OCI-LY7 (cell line): ENCODE measurements at regions of chr20 and their contacts with region 1.

Region 1: DNA sequence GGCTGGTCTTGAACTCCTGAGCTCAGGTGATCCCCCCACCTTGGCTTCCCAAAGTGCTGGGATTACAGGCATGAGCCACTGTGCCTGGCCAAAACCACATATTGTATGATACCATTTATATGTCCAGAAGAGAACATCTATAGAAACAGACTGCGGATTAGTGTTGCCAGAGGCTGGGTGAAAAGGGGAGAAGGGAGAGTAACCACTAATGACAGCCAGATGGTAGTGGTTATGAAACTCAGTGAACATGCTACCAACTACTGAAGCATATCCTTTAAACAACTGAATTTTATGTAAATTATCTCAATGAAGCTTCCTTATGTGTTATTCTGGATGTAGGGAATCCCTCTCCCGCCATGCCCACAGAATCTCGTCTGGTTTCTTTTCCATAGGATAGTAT is 15.7 kb downstream of the SLC23A2 start:
- DNase-seq: peak; percentile 76
- H3K4me3 ChIP-seq: peak overlapping the region; percentile 35
- H3K27ac ChIP-seq: peak overlapping the region; percentile 89
- H3K4me1 ChIP-seq: peaks cover 64% of the 10 kb centered on the region
- CTCF ChIP-seq: no peak

Region 2: DNA sequence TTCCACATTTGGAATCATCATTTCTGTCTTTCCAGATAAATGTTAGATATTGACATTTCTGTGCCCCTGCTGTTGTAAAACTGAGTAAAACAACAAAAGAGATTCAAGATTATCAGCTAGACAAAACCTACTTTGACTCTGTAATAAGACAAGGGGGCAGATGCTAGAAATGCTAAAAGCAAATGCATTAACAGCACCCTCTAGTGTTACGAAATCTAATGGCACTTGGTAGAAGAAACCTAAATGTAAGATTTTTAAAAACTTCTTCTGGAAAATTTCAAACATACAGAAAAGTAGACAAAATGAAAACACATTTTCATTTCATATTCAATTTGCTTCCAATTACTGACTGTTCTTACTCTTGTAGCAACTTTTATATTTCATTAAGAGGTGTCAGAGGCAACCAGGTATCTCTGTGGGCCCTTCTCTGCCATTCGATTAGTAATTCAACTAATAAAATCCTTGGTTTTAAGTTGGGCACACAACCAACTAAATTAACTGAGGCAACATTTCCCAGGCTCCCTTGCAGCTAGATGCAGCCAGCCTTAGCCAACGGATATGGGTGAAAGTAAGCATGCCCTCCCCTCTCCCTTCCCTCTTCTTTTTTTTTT is 29.4 kb before region 1 on chr20:
- CTCF ChIA-PET with region 1: no interaction called
- POLR2A ChIA-PET with region 1: no interaction called
- intact Hi-C with region 1: no loop called
- DNase-seq: peak; percentile 77
- H3K4me3 ChIP-seq: no peak overlapping the region
- H3K27ac ChIP-seq: no peak overlapping the region
- H3K4me1 ChIP-seq: peaks cover 4% of the 10 kb centered on the region
- CTCF ChIP-seq: peak; percentile 99

Region 3: GRCh38 chr20:5073660-5074231 is 88.1 kb after region 1 on chr20:
- CTCF ChIA-PET with region 1: no interaction called
- POLR2A ChIA-PET with region 1: no interaction called
- intact Hi-C with region 1: no loop called
- DNase-seq: no peak
- H3K4me3 ChIP-seq: no peak overlapping the region
- H3K27ac ChIP-seq: no peak overlapping the region
- H3K4me1 ChIP-seq: peaks cover 22% of the 10 kb centered on the region
- CTCF ChIP-seq: no peak

Region 4: GRCh38 chr20:5090191-5090590 is 104.5 kb after region 1 on chr20:
- CTCF ChIA-PET with region 1: no interaction called
- POLR2A ChIA-PET with region 1: interaction called, 3 read pairs
- intact Hi-C with region 1: loop called (anchors 5 kb)
- DNase-seq: peak; percentile 60
- H3K4me3 ChIP-seq: no peak overlapping the region
- H3K27ac ChIP-seq: peak overlapping the region; percentile 35
- H3K4me1 ChIP-seq: peaks cover 47% of the 10 kb centered on the region
- CTCF ChIP-seq: no peak